ENCODE measurements at regions of chr19 and their contacts with region 1.

Region 1: GRCh38 chr19:49301165-49301865 is 23.7 kb downstream of the SLC6A16 start:
- DNase-seq: peak; percentile 38
- ATAC-seq: peak; percentile 96
- H3K4me3 ChIP-seq: no peak overlapping the region
- H3K27ac ChIP-seq: no peak overlapping the region
- H3K4me1 ChIP-seq: no peaks in the 10 kb centered on the region; the same call in 1 of the 2 replicates
- H3K27me3 ChIP-seq: no peaks in the 10 kb centered on the region
- CTCF ChIP-seq: peak; percentile 90

Region 2: DNA sequence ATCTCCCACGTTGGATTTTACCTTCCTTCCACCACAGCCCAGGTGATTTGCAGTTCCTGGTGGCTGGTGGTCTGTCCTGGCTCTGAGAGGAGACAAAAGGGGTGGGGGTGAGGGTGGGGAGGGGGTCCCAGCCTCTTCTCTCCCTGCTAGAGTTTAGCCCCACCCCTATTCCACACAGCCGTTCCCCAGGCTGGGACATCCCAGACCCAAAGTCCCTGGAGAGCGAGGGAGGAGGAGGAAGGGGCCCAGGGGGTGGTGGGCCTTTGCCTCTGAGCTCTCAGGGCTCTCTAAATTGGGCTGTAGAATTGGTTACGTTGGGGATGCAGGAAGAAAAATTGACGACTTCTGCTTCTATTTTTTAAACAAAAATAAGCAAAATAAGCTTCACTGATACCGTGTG is 58.2 kb before region 1 on chr19:
- CTCF ChIA-PET with region 1: no interaction called
- POLR2A ChIA-PET with region 1: no interaction called
- in situ Hi-C with region 1: no loop called
- intact Hi-C with region 1: no loop called
- DNase-seq: no peak
- ATAC-seq: no peak
- H3K4me3 ChIP-seq: no peak overlapping the region
- H3K27ac ChIP-seq: no peak overlapping the region
- H3K4me1 ChIP-seq: no peaks in the 10 kb centered on the region
- H3K27me3 ChIP-seq: no peaks in the 10 kb centered on the region
- CTCF ChIP-seq: no peak

Region 3: GRCh38 chr19:49327878-49328544 is 26.7 kb after region 1 on chr19:
- CTCF ChIA-PET with region 1: interaction called, 10 read pairs
- POLR2A ChIA-PET with region 1: no interaction called
- in situ Hi-C with region 1: no loop called
- intact Hi-C with region 1: no loop called
- DNase-seq: no peak
- ATAC-seq: no peak
- H3K4me3 ChIP-seq: no peak overlapping the region
- H3K27ac ChIP-seq: no peak overlapping the region
- H3K4me1 ChIP-seq: no peaks in the 10 kb centered on the region
- H3K27me3 ChIP-seq: no peaks in the 10 kb centered on the region
- CTCF ChIP-seq: peak; percentile 83

Measured in Panc1 (cell line).